Mammary epithelial cell (primary cell): ENCODE measurements at regions of chr11 and their contacts with region 1.

Region 1: GRCh38 chr11:77066229-77067042 is at the start of gene CAPN5:
- DNase-seq: peak; percentile 84
- H3K4me3 ChIP-seq: peak within 1 kb of the TSS; percentile 67 to 85 (median 79)
- H3K27ac ChIP-seq: no peak within 1 kb of the TSS
- H3K4me1 ChIP-seq: peaks cover 7% of the 10 kb centered on the region
- H3K27me3 ChIP-seq: no peaks in the 10 kb centered on the region
- CTCF ChIP-seq: peak in 1 of 2 donors; percentile 24
- total RNA-seq, gene CAPN5: 3.0 to 4.3 TPM

Region 2: DNA sequence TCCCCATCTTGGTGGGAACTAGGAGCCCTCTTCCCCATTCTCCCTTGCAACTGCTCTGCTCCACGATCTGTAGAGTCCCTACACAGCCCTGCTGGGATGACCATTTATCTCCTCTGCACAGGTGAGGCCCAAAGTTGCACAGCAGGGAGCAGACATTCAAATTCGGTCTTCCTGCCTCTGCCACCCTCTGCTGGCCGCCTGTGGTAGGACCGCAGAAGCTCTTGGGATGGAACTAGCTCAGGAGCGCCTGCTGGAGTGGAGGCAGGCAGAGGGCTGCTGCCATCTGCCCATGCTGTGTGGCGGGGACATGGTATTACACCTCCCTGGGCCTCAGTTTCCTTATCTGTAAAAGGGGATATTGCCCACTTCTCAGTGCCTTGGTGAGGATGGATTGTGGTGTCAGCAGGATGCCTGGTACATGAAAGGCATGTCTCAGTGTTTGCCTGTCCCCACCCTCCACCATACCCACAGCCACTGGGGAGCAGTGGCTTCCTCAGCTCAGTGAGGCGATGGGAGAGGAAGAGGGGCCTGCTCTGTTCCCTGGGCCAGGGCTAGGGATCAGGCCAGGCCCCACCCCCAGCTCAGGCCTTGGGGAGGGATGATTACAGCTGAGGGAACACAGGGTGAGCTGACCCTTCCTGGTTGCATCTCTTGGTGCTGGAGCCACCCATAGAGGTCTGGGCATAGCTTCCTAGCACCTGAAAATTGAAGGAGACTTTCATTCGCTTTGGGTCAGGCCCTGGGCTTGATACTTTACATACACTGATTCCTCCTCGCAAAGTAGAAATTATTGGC is 24.9 kb after region 1 on chr11:
- CTCF ChIA-PET with region 1: interaction called, 5 read pairs
- dilution Hi-C with region 1: no loop called
- in situ Hi-C with region 1: no loop called
- intact Hi-C with region 1: loop called (anchors 1 kb)
- DNase-seq: peak; percentile 64
- H3K4me3 ChIP-seq: no peak overlapping the region
- H3K27ac ChIP-seq: no peak overlapping the region
- H3K4me1 ChIP-seq: no peaks in the 10 kb centered on the region
- H3K27me3 ChIP-seq: no peaks in the 10 kb centered on the region
- CTCF ChIP-seq: peak; percentile 96 to 98

Region 3: GRCh38 chr11:77121096-77121640 is 54.7 kb after region 1 on chr11:
- CTCF ChIA-PET with region 1: no interaction called
- dilution Hi-C with region 1: loop called (anchors 5 kb)
- in situ Hi-C with region 1: no loop called
- intact Hi-C with region 1: no loop called
- DNase-seq: no peak
- H3K4me3 ChIP-seq: no peak overlapping the region
- H3K27ac ChIP-seq: no peak overlapping the region
- H3K4me1 ChIP-seq: no peaks in the 10 kb centered on the region
- H3K27me3 ChIP-seq: no peaks in the 10 kb centered on the region
- CTCF ChIP-seq: no peak